ENCODE measurements at regions of chr10 and their contacts with region 1.

Region 1: DNA sequence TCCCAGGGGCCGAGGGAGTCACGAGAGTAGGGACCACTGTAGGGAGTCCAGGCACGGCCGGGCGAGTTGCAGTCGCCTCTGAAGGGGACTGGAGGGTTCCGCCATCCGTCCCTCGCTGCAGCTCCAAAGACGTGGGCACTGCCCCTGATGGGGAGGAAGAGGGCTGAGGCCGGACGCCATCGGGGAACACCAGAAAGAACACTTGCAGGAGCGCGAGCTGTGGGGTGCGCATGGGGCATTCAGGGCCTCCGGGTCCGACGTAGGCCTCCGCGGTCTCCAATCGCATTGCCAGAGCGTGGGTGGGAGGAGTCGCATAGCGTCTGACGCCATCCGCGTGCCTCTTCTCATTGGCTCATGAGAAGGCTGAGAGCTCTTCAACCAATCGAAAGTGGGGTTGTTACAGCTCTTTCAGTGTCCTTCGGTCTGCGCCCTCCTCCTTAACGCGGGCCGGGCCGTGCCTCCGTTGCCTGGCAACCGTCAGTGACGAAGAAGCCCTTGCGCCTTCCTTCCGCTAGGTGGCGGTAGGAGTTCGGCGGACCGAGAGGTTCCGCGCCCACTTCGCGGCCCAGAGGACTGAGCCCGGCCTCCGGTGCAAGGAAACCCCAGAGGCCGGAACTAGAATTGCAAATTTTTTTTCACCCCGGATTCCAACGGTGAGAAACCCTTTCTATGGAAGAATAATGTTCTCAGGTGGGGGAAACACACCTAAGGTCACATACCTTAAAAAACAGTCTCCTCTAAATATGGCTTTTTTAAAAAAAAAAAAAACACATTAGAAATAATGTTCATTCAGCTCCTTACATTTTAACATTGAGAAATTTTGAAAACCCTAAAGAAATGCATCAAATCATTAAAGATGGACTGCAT is at the start of gene TCTN3:
- DNase-seq: peak; percentile 97 to 99 (median 98)
- H3K4me3 ChIP-seq: peak within 1 kb of the TSS; percentile 73 to 97
- H3K4me3 Mint-ChIP-seq: peak within 1 kb of the TSS; percentile 94 to 98 (median 96)
- H3K27ac ChIP-seq: peak within 1 kb of the TSS; percentile 87
- H3K27ac Mint-ChIP-seq: peak within 1 kb of the TSS; percentile 96 to 99 (median 98)
- H3K4me1 ChIP-seq: peaks cover 29% of the 10 kb centered on the region
- H3K4me1 Mint-ChIP-seq: peaks cover 22 to 52% (median 33%) of the 10 kb centered on the region in 4 donors
- H3K27me3 ChIP-seq: no peaks in the 10 kb centered on the region
- H3K27me3 Mint-ChIP-seq: no peaks in the 10 kb centered on the region
- total RNA-seq, gene TCTN3: 20.5 to 22.2 TPM

Region 2: DNA sequence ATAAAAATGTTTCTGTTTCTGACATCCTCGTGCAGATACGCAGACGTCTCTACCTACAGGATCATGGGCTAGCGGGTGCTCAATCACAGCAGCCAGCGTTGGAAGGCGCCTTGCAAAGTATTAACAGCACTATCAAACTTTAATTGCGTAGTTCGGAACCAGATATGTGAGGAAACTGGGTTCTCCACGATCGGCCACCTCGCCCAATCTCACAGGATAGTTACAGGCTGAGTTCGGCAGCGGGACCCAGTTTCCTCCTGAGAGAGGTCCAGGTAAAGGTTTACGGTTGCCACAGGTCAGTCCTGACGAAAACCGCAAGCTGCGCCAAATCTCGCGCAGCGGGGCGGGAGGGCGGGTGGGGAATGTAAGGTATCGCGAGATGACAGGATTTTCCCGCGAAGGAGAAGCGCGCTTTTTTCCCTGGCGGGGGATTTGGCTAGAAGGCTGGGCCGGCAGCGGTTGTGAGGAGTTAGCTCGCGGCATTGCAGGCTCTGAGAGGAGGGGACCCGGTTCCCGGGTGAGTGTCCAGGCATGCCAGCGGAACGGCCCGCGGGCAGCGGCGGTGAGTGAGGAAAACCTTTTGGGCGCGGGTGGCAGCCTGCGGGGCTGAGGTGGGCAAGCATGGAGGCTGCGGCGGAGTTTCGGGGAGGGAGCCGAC is 1148.4 kb before region 1 on chr10 and contains the start of gene HELLS:
- CTCF ChIA-PET with region 1: no interaction called
- POLR2A ChIA-PET with region 1: no interaction called
- intact Hi-C with region 1: loop called (anchors 10 kb)
- DNase-seq: peak; percentile 71 to 81 (median 79)
- H3K4me3 ChIP-seq: peak within 1 kb of the TSS; percentile 79 to 93
- H3K4me3 Mint-ChIP-seq: peak within 1 kb of the TSS; percentile 92 to 100 (median 97)
- H3K27ac ChIP-seq: peak within 1 kb of the TSS; percentile 75
- H3K27ac Mint-ChIP-seq: peak within 1 kb of the TSS; percentile 91 to 98 (median 93)
- H3K4me1 ChIP-seq: peaks cover 23% of the 10 kb centered on the region
- H3K4me1 Mint-ChIP-seq: peaks cover 14 to 29% (median 22%) of the 10 kb centered on the region in 4 donors
- H3K27me3 ChIP-seq: no peaks in the 10 kb centered on the region
- H3K27me3 Mint-ChIP-seq: no peaks in the 10 kb centered on the region
- total RNA-seq, gene HELLS: 14.4 to 16.3 TPM

Region 3: GRCh38 chr10:95661818-95662217 is 32.1 kb before region 1 on chr10:
- CTCF ChIA-PET with region 1: interaction called, 17 read pairs
- POLR2A ChIA-PET with region 1: interaction called, 14 read pairs
- intact Hi-C with region 1: no loop called
- DNase-seq: no peak
- H3K4me3 ChIP-seq: no peak overlapping the region
- H3K4me3 Mint-ChIP-seq: peak overlapping the region in 1 of 8 donors; percentile 39
- H3K27ac ChIP-seq: no peak overlapping the region
- H3K27ac Mint-ChIP-seq: peak overlapping the region in 2 of 7 donors; percentile 63 to 80
- H3K4me1 ChIP-seq: peaks cover 5% of the 10 kb centered on the region
- H3K4me1 Mint-ChIP-seq: peaks cover 2 to 8% (median 5%) of the 10 kb centered on the region in 4 donors
- H3K27me3 ChIP-seq: no peaks in the 10 kb centered on the region
- H3K27me3 Mint-ChIP-seq: no peaks in the 10 kb centered on the region

Region 4: GRCh38 chr10:95748349-95748748 is 54.4 kb after region 1 on chr10:
- CTCF ChIA-PET with region 1: no interaction called
- POLR2A ChIA-PET with region 1: no interaction called
- intact Hi-C with region 1: no loop called
- DNase-seq: no peak
- H3K4me3 ChIP-seq: no peak overlapping the region
- H3K4me3 Mint-ChIP-seq: no peak overlapping the region
- H3K27ac ChIP-seq: no peak overlapping the region
- H3K27ac Mint-ChIP-seq: no peak overlapping the region
- H3K4me1 ChIP-seq: no peaks in the 10 kb centered on the region
- H3K4me1 Mint-ChIP-seq: no peaks in the 10 kb centered on the region
- H3K27me3 ChIP-seq: no peaks in the 10 kb centered on the region
- H3K27me3 Mint-ChIP-seq: peaks cover 2 to 9% of the 10 kb centered on the region in 2 donors

Region 5: GRCh38 chr10:95832216-95833041 is 138.5 kb after region 1 on chr10:
- CTCF ChIA-PET with region 1: interaction called, 290 read pairs
- POLR2A ChIA-PET with region 1: interaction called, 4 read pairs
- intact Hi-C with region 1: no loop called
- DNase-seq: peak; percentile 16 to 87 (median 78)
- H3K4me3 ChIP-seq: no peak overlapping the region
- H3K4me3 Mint-ChIP-seq: peak overlapping the region in 5 of 8 donors; percentile 30 to 68 (median 38)
- H3K27ac ChIP-seq: peak overlapping the region; percentile 60
- H3K27ac Mint-ChIP-seq: peak overlapping the region; percentile 10 to 97 (median 93)
- H3K4me1 ChIP-seq: peaks cover 39% of the 10 kb centered on the region
- H3K4me1 Mint-ChIP-seq: peaks cover 0 to 26% (median 14%) of the 10 kb centered on the region in 4 donors
- H3K27me3 ChIP-seq: no peaks in the 10 kb centered on the region
- H3K27me3 Mint-ChIP-seq: no peaks in the 10 kb centered on the region

Region 6: GRCh38 chr10:95873651-95874050 is 179.8 kb after region 1 on chr10:
- CTCF ChIA-PET with region 1: interaction called, 26 read pairs
- POLR2A ChIA-PET with region 1: no interaction called
- intact Hi-C with region 1: no loop called
- DNase-seq: no peak
- H3K4me3 ChIP-seq: no peak overlapping the region
- H3K4me3 Mint-ChIP-seq: no peak overlapping the region
- H3K27ac ChIP-seq: no peak overlapping the region
- H3K27ac Mint-ChIP-seq: no peak overlapping the region
- H3K4me1 ChIP-seq: no peaks in the 10 kb centered on the region
- H3K4me1 Mint-ChIP-seq: no peaks in the 10 kb centered on the region
- H3K27me3 ChIP-seq: no peaks in the 10 kb centered on the region
- H3K27me3 Mint-ChIP-seq: no peaks in the 10 kb centered on the region

Region 7: GRCh38 chr10:96043033-96043932 is 349.4 kb after region 1 on chr10 and contains the start of gene CCNJ:
- CTCF ChIA-PET with region 1: interaction called, 6 read pairs
- POLR2A ChIA-PET with region 1: interaction called, 4 read pairs
- intact Hi-C with region 1: loop called (anchors 1 kb)
- DNase-seq: peak; percentile 77 to 87 (median 85)
- H3K4me3 ChIP-seq: peak within 1 kb of the TSS; percentile 60 to 69
- H3K4me3 Mint-ChIP-seq: peak within 1 kb of the TSS; percentile 91 to 96 (median 92)
- H3K27ac ChIP-seq: peak within 1 kb of the TSS; percentile 64
- H3K27ac Mint-ChIP-seq: peak within 1 kb of the TSS; percentile 54 to 95 (median 92)
- H3K4me1 ChIP-seq: peaks cover 19% of the 10 kb centered on the region
- H3K4me1 Mint-ChIP-seq: peaks cover 26 to 48% (median 36%) of the 10 kb centered on the region in 4 donors
- H3K27me3 ChIP-seq: no peaks in the 10 kb centered on the region
- H3K27me3 Mint-ChIP-seq: peaks cover 3 to 6% of the 10 kb centered on the region in 2 donors
- total RNA-seq, gene CCNJ: 7.1 TPM

Region 8: DNA sequence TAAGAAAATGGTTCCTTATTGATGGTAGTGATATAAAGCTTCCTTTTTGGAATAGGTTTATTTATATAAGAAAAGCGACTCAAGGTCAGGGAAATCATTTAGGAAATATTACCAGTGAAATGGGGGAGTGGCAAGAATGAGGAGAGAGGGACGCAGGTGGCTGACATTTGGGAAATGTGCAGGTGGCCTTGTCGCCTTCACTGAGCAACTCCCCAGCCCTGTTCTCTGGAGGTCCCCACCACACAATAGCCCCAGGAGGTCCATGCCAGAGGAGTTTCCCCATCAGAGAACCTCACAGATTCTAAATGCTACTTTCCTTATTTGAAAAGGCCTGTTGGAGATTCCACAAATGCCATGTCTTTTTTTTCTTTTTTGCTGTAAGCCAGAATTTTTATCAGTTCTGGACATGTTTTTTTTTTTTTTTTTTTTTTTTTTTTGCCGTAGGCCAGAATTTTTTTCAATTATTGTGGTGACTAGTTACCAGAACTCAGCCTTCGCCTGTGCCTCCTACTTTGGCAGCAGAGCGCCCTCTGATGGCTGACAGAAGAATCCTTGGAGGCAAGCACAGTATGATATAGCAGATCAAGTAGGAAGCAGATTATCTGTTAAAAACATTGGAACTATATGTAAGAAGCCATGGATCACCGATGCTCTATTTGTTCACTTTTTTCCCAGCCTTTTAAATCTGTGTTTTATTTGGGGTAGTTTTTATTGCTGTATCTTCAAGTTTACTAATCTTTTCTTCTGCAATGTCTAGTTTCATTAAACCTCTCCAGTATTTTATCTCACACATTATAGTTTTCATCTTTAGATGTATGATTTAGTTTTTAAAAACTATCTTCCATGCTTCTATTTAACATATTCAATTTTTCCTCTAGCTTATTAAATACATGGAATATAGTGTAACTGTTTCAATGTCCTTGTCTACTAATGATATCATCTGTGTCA is 646.3 kb after region 1 on chr10:
- CTCF ChIA-PET with region 1: interaction called, 8 read pairs
- POLR2A ChIA-PET with region 1: no interaction called
- intact Hi-C with region 1: loop called (anchors 1 kb)
- DNase-seq: peak in 4 of 5 donors; percentile 30 to 51 (median 45)
- H3K4me3 ChIP-seq: no peak overlapping the region
- H3K4me3 Mint-ChIP-seq: no peak overlapping the region
- H3K27ac ChIP-seq: no peak overlapping the region
- H3K27ac Mint-ChIP-seq: no peak overlapping the region
- H3K4me1 ChIP-seq: no peaks in the 10 kb centered on the region
- H3K4me1 Mint-ChIP-seq: no peaks in the 10 kb centered on the region
- H3K27me3 ChIP-seq: peaks cover 2% of the 10 kb centered on the region
- H3K27me3 Mint-ChIP-seq: peaks cover 2 to 23% of the 10 kb centered on the region in 2 donors